Right lobe of liver (tissue), 6 donors: ENCODE measurements at regions of chr16 and their contacts with region 1.

Region 1: GRCh38 chr16:72832621-72833248 is 215.2 kb downstream of the ZFHX3 start:
- DNase-seq: peak; percentile 82 to 85 (median 84)
- ATAC-seq: peak; percentile 89 to 93 (median 91)
- H3K4me3 ChIP-seq: no peak overlapping the region
- H3K27ac ChIP-seq: no peak overlapping the region
- H3K4me1 ChIP-seq: peaks cover 0 to 25% (median 12%) of the 10 kb centered on the region in 4 donors
- H3K27me3 ChIP-seq: no peaks in the 10 kb centered on the region
- CTCF ChIP-seq: peak; percentile 92 to 95 (median 94)
- POLR2A ChIP-seq: no peak

Region 2: GRCh38 chr16:72952811-72953595 is 120.3 kb after region 1 on chr16:
- intact Hi-C with region 1: loop called in 1 of 2 experiments (anchors 10 kb)
- DNase-seq: no peak
- ATAC-seq: no peak
- H3K4me3 ChIP-seq: no peak overlapping the region
- H3K27ac ChIP-seq: no peak overlapping the region
- H3K4me1 ChIP-seq: peaks cover 0 to 13% (median 2%) of the 10 kb centered on the region in 4 donors
- H3K27me3 ChIP-seq: no peaks in the 10 kb centered on the region
- CTCF ChIP-seq: no peak
- POLR2A ChIP-seq: no peak

Region 3: GRCh38 chr16:73047518-73048291 is 215.0 kb after region 1 on chr16 and contains the start of gene ZFHX3:
- intact Hi-C with region 1: loop called in 1 of 2 experiments (anchors 10 kb)
- DNase-seq: peak; percentile 74 to 87 (median 86)
- ATAC-seq: peak; percentile 64 to 81 (median 75)
- H3K4me3 ChIP-seq: peak within 1 kb of the TSS; percentile 79 to 92 (median 83)
- H3K27ac ChIP-seq: peak within 1 kb of the TSS; percentile 85 to 95 (median 89)
- H3K4me1 ChIP-seq: peaks cover 0 to 48% (median 14%) of the 10 kb centered on the region in 4 donors
- H3K27me3 ChIP-seq: no peaks in the 10 kb centered on the region
- CTCF ChIP-seq: peak in 3 of 4 donors; percentile 12 to 45 (median 16)
- POLR2A ChIP-seq: peak; percentile 42
- total RNA-seq, gene ZFHX3: 7.1 to 9.4 (median 7.7) TPM

Region 4: DNA sequence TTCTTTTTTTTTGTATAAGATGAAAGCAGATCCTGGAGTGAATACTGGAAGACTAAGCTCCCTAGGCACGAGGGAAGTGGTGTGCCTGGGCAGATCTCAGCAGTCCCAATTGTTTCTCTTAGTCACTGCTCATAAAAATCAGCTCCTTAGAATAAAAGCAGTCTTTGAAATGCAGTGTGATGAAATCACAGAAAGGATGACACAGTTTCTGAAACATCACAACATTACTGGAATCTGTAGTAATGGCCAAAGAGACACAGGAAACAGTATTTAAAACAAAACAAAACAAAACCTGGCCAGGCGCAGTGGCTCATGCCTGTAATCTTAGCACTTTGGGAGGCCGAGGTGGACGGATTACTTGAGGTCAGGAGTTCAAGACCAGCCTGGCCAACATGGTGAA is 249.9 kb after region 1 on chr16:
- intact Hi-C with region 1: no loop called
- DNase-seq: no peak
- ATAC-seq: peak in 1 of 4 donors; percentile 51
- H3K4me3 ChIP-seq: no peak overlapping the region
- H3K27ac ChIP-seq: no peak overlapping the region
- H3K4me1 ChIP-seq: peaks cover 0 to 2% (median 0%) of the 10 kb centered on the region in 4 donors
- H3K27me3 ChIP-seq: no peaks in the 10 kb centered on the region
- CTCF ChIP-seq: no peak
- POLR2A ChIP-seq: no peak